ENCODE measurements at regions of chr10 and their contacts with region 1.

Region 1: DNA sequence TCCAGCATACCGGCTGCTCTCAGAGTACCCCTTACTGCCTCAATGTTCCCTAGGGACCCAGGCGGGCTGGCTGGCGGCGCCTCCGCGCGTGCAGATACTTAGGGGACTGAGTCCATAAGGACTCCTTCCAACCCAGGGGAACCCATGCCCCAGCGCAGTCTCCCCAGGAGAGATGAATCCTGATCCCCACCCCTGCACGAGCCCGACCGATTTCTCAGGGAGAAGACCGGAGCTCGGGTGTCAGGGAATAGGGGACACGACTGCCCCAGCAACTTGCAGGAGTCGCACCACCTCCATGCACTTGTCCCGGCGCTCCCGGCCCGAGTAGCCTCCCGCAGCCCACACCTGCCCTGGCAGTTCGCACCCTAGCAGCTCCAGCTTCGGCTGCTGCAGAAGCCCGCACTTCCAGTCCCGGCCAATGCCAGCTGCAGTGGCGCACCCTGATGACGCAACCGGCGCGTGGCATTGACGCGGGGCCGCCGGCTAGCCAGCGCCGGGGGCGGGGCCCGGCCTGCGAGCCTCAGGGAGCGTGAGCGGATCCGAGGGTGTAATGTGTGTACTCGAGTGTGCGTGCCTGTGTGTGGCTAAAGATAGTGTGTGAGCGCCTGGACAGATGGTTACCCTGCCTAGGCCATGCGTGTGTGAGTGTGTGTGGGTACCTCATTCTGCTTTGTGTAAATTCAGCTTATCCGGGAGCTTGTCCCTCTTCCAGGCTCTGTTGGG is at the start of gene GPAM:
- DNase-seq: peak; percentile 93 to 99 (median 95)
- H3K4me3 ChIP-seq: peak within 1 kb of the TSS; percentile 85 to 95
- H3K4me3 Mint-ChIP-seq: peak within 1 kb of the TSS; percentile 83 to 98 (median 94)
- H3K27ac ChIP-seq: peak within 1 kb of the TSS; percentile 59
- H3K27ac Mint-ChIP-seq: peak within 1 kb of the TSS; percentile 85 to 98 (median 97)
- H3K4me1 ChIP-seq: peaks cover 18% of the 10 kb centered on the region
- H3K4me1 Mint-ChIP-seq: peaks cover 17 to 43% (median 26%) of the 10 kb centered on the region in 4 donors
- H3K27me3 ChIP-seq: no peaks in the 10 kb centered on the region
- H3K27me3 Mint-ChIP-seq: peaks cover 0 to 1% of the 10 kb centered on the region in 2 donors
- total RNA-seq, gene GPAM: 6.3 to 8.8 TPM

Region 2: DNA sequence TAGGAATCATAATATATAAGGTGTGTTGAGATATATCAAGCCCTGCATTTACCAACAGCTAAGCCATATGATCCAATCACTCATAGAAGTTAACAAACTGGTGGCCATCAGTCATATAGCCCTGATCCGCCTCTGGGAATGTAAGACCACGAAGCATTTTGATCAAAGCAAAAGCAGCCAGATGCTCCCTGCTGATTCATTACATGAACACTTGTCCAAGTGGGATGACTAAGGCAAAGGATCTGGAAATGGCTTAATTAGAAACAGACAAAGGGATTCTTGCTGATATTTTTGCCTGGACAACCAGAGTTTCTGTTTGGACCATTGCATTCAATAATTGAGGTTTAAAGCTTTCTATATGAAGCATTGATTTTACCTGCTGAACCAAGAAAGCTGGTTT is 535.4 kb before region 1 on chr10:
- CTCF ChIA-PET with region 1: no interaction called
- POLR2A ChIA-PET with region 1: no interaction called
- intact Hi-C with region 1: no loop called
- DNase-seq: no peak
- H3K4me3 ChIP-seq: no peak overlapping the region
- H3K4me3 Mint-ChIP-seq: no peak overlapping the region
- H3K27ac ChIP-seq: no peak overlapping the region
- H3K27ac Mint-ChIP-seq: no peak overlapping the region
- H3K4me1 ChIP-seq: no peaks in the 10 kb centered on the region
- H3K4me1 Mint-ChIP-seq: no peaks in the 10 kb centered on the region
- H3K27me3 ChIP-seq: no peaks in the 10 kb centered on the region
- H3K27me3 Mint-ChIP-seq: peaks cover 2 to 4% of the 10 kb centered on the region in 2 donors

Region 3: DNA sequence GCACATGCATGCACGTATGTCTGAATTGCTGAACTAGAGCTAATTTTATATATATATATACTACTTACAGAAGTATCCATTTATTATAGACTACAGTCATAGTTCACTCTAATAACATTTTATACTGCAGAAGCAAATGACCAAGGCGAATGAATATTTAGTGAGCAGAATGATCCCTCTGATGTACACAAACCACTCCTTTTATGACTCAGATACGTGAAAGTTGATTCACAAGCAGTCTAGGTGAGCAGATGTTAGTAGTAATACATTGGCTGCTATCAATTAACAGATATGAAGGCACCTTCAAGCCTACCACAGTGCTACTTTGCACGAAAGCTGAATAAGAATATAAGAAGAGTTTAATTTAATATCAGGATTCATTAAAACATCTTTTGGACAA is 10.3 kb before region 1 on chr10:
- CTCF ChIA-PET with region 1: interaction called, 20 read pairs
- POLR2A ChIA-PET with region 1: interaction called, 5 read pairs
- intact Hi-C with region 1: no loop called
- DNase-seq: no peak
- H3K4me3 ChIP-seq: no peak overlapping the region
- H3K4me3 Mint-ChIP-seq: no peak overlapping the region
- H3K27ac ChIP-seq: no peak overlapping the region
- H3K27ac Mint-ChIP-seq: no peak overlapping the region
- H3K4me1 ChIP-seq: no peaks in the 10 kb centered on the region
- H3K4me1 Mint-ChIP-seq: no peaks in the 10 kb centered on the region
- H3K27me3 ChIP-seq: no peaks in the 10 kb centered on the region
- H3K27me3 Mint-ChIP-seq: no peaks in the 10 kb centered on the region